Calu3 (cell line): ENCODE measurements at regions of chr2 and their contacts with region 1.

Region 1: DNA sequence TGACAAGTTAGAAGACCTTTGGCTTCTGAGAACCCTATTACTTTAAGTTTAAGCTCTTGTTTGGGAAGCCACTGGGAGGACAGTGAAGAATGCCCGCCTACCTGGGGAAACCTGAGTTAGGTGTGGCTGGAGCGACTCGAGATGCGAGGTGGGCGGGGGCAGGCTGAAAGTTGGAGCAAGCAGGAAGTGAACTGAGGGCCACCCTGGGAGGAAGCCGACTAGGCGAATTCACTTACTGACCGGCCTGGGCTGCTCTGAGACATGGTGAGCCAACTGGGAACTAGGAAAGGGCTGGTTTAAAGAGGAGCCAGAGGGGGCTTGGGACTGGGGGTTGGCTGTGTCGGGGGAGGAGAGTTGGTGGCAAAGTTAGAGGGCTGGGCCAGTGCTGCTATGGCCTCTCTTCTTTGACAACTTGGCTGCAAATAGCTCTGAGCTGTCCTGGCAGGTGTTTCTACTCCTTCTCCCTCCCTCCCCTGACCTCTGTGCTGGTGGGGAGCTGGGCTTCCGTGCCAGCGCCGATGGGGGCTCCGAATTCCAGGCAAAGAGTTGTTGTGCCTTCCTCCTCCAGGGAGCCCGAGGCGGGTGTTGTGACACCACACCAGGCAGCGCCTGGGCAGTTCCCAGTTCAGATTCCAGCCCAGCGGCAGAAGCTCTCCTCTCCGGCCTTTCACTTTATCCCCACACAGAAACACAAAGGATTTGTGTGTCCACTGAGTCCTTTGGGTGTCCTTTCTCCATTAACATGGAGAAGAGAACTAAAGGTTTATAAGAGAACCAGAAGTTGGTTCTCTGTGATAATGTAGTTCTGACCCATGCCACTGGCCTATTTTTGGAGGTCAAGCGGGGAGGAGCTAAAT is at the start of gene VAMP8:
- DNase-seq: peak; percentile 88
- H3K4me3 Mint-ChIP-seq: peak within 1 kb of the TSS; percentile 88
- H3K27ac Mint-ChIP-seq: peak within 1 kb of the TSS; percentile 70
- H3K4me1 Mint-ChIP-seq: peaks cover 22% of the 10 kb centered on the region
- H3K27me3 Mint-ChIP-seq: peaks cover 6% of the 10 kb centered on the region
- CTCF ChIP-seq: no peak
- total RNA-seq, gene VAMP8: 90.8 and 107 TPM in 2 replicates

Region 2: DNA sequence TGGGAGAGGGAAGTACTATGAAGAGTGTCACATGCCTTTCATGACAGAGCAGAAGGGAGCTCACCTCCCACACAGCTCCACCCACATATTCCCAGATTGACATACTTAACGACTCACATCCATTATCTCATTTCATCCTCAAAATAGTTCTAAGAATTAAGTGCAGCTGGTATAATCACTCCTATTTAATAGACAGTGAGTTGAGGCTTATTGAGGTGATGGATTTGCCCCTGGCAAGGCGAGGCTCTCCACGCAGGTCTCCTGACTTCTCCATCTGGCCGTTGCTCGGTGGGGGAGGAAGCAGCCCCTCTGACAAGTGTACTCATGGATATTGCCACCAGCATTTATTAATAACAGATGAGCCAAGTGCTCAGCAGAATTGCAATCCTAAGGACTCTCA is 331.3 kb before region 1 on chr2:
- CTCF ChIA-PET with region 1: interaction called, 10 read pairs
- intact Hi-C with region 1: no loop called
- DNase-seq: no peak
- H3K4me3 Mint-ChIP-seq: no peak overlapping the region
- H3K27ac Mint-ChIP-seq: no peak overlapping the region
- H3K4me1 Mint-ChIP-seq: no peaks in the 10 kb centered on the region
- H3K27me3 Mint-ChIP-seq: peaks cover 22% of the 10 kb centered on the region
- CTCF ChIP-seq: no peak

Region 3: GRCh38 chr2:85595301-85596025 is 17.8 kb after region 1 on chr2 and contains the start of gene RNF181:
- CTCF ChIA-PET with region 1: interaction called, 11 read pairs
- intact Hi-C with region 1: no loop called
- DNase-seq: peak; percentile 93
- H3K4me3 Mint-ChIP-seq: peak within 1 kb of the TSS; percentile 98
- H3K27ac Mint-ChIP-seq: peak within 1 kb of the TSS; percentile 97
- H3K4me1 Mint-ChIP-seq: peaks cover 11% of the 10 kb centered on the region
- H3K27me3 Mint-ChIP-seq: no peaks in the 10 kb centered on the region
- CTCF ChIP-seq: no peak
- total RNA-seq, gene RNF181: 101 and 102 TPM in 2 replicates